ENCODE measurements at regions of chr1 and their contacts with region 1.

Region 1: DNA sequence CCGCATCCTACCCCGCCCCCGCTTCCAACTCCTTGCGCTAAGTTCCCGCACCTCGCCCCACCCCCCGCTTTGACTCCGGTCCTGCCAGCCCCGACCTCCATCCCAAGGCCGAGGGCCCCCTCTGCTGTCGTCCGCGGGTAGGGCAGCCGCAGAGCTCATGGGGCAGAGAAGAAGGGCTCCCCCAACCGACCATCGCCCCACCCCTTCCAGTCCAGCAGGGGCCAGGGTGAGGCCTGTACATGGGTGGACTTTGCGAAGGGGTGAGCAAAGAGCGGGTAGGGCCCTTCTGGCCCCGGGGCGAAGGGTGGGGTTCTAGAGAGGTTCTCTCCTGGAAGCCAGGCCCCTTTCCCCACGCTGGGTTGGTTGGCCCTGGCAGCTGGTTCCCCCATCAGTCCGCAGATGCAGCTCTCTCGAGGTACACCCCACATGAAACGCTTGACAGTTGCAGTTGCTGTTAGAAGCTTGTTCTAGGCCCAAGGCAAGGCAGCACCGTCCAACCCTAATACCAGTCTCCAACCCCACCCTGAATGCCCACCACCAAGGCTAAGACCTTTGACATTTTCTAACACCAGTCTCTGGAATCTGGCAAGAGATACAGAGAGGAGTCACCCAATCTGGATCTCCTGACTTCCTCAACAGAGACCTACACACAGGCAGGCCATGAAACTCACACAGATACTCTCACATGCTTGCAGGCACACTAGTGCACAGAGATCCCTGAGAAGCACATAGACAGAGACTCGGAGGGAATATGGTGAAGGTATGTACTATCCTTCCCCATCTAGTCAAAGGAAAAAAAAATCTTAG is 25.3 kb upstream of the ADGRB2 start:
- H3K4me3 ChIP-seq: peak overlapping the region; percentile 64
- H3K27ac ChIP-seq: no peak overlapping the region
- H3K4me1 ChIP-seq: no peaks in the 10 kb centered on the region
- CTCF ChIP-seq: peak; percentile 98

Region 2: DNA sequence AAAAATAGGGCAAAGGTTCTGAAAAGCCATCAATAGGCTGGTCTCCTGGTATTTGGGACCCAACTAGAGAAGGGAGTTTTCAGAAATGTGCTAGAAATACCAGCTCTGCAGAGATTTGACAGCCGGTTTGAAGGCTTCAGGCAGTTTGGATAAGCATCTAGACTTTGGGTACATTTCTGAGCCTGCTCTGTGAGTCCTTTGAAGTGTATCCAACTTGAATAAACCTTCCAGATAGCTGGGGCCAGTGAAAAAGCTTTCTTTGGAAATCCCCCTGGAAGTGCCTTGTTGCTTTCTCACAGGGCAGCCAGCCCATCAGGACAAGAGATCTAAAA is 138.4 kb before region 1 on chr1:
- CTCF ChIA-PET with region 1: interaction called, 11 read pairs
- POLR2A ChIA-PET with region 1: no interaction called
- H3K4me3 ChIP-seq: no peak overlapping the region
- H3K27ac ChIP-seq: no peak overlapping the region
- H3K4me1 ChIP-seq: no peaks in the 10 kb centered on the region
- CTCF ChIP-seq: no peak

Region 3: GRCh38 chr1:31745096-31745945 is 44.1 kb before region 1 on chr1:
- CTCF ChIA-PET with region 1: interaction called, 20 read pairs
- POLR2A ChIA-PET with region 1: interaction called, 3 read pairs
- H3K4me3 ChIP-seq: no peak overlapping the region
- H3K27ac ChIP-seq: no peak overlapping the region
- H3K4me1 ChIP-seq: no peaks in the 10 kb centered on the region; the same call in 1 of the 2 replicates
- CTCF ChIP-seq: peak; percentile 60

Region 4: DNA sequence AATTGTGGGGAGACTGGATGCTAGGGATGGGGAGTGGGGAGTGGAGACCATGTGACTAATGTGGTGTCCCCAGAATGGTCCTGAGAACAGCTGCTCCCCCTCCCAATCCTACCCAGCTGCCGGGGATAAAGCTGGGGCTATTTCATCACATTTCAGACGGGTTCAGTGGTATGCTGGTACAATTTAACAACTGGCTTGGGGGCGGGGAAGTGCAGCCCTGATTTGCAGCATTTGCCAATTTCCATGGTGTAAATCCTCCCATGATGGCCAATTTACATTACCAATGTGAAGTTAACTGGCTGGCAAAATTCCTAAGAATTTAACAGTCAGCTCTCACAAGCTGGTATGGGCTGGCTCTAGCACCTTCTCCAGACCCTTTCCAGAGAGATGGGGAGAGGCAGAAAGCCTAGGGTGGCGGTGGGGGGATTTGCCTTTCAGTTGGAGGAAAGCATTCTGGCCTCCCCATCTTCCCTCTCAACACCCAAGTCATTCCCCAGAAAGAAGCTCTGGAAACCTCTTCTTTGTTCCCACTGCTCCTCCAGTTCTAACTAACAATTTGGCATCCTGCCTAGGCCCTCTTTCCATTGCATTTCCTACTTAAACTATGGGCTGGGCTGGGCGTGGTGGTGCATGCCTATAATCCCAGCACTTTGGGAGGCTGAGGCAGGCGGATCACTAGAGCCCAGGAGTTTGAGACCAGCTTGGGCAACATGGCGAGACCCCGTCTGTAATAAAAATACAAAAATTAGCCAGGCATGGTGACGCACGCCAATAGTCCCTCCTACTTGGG is 14.1 kb before region 1 on chr1:
- CTCF ChIA-PET with region 1: interaction called, 14 read pairs
- POLR2A ChIA-PET with region 1: no interaction called
- H3K4me3 ChIP-seq: no peak overlapping the region
- H3K27ac ChIP-seq: no peak overlapping the region
- H3K4me1 ChIP-seq: no peaks in the 10 kb centered on the region
- CTCF ChIP-seq: no peak

Region 5: GRCh38 chr1:31822766-31823165 is 33.3 kb after region 1 on chr1:
- CTCF ChIA-PET with region 1: no interaction called
- POLR2A ChIA-PET with region 1: no interaction called
- H3K4me3 ChIP-seq: no peak overlapping the region
- H3K27ac ChIP-seq: no peak overlapping the region
- H3K4me1 ChIP-seq: no peaks in the 10 kb centered on the region
- CTCF ChIP-seq: no peak

Region 6: GRCh38 chr1:31961536-31961935 is 172.1 kb after region 1 on chr1:
- CTCF ChIA-PET with region 1: interaction called, 33 read pairs
- POLR2A ChIA-PET with region 1: interaction called, 4 read pairs
- H3K4me3 ChIP-seq: no peak overlapping the region
- H3K27ac ChIP-seq: no peak overlapping the region
- H3K4me1 ChIP-seq: peaks cover 3% of the 10 kb centered on the region; the same call in 1 of the 2 replicates
- CTCF ChIP-seq: no peak

Region 7: DNA sequence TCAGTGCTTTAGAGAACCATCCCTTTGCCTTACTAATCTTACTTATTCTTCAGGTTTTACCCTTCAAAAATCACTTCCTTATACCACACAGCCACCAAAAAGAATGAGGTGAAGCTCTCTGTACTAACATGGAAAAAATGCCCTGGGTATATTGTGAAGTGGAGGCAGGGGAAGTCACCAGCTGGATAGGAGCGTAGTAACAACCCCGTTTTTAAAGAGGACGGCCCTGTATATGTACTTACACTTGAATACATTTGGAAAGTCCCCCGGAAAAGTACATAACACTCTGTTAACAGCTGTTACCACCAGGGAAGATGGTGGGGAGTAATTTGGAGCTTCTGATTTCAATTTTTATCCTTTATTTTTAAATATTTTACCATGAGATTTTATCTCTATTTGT is 196.0 kb after region 1 on chr1:
- CTCF ChIA-PET with region 1: no interaction called
- POLR2A ChIA-PET with region 1: no interaction called
- H3K4me3 ChIP-seq: no peak overlapping the region
- H3K27ac ChIP-seq: no peak overlapping the region
- H3K4me1 ChIP-seq: no peaks in the 10 kb centered on the region
- CTCF ChIP-seq: no peak

Measured in HEK293 (cell line).